ENCODE measurements at regions of chr19 and their contacts with region 1.

Region 1: GRCh38 chr19:53849237-53849676 is 18.4 kb upstream of the MYADM start:
- DNase-seq: peak; percentile 49
- ATAC-seq: peak; percentile 58
- H3K4me3 ChIP-seq: no peak overlapping the region
- H3K27ac ChIP-seq: no peak overlapping the region
- H3K4me1 ChIP-seq: 0 out of 2 replicates have a peak, but pooled peaks cover 6% of the 10 kb centered on the region
- H3K27me3 ChIP-seq: no peaks in the 10 kb centered on the region
- CTCF ChIP-seq: no peak

Region 2: GRCh38 chr19:54029930-54030490 is 180.8 kb after region 1 on chr19:
- CTCF ChIA-PET with region 1: interaction called, 10 read pairs
- POLR2A ChIA-PET with region 1: no interaction called
- intact Hi-C with region 1: no loop called
- DNase-seq: peak; percentile 94
- ATAC-seq: peak; percentile 79
- H3K4me3 ChIP-seq: no peak overlapping the region
- H3K27ac ChIP-seq: no peak overlapping the region
- H3K4me1 ChIP-seq: peaks cover 21% of the 10 kb centered on the region
- H3K27me3 ChIP-seq: no peaks in the 10 kb centered on the region
- CTCF ChIP-seq: peak; percentile 80

Region 3: DNA sequence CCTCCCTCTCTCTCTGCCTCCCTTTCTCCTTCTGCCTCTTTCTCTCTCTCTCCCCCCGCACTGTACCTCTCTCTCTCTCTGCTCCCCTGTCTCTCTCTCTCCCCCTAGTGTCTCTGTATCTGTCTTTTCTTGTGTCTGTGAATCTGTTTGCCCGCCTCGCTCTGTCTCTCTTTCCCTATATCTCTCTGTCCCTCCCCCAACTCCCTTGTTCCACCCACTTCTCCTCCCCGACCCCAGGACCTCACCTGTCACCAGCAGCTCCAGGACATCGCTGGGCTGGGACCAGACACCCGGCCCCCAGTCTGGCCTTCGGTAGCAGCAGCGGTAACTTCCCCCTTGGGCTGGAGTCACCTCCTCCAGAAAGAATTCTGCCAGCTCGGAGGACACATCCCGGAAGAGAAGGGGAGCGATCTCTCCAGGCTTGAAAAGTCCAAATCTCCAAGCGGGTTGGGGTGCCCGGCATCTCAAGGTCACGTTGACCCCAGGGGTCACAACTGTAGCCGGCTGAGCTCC is 247.4 kb after region 1 on chr19:
- CTCF ChIA-PET with region 1: no interaction called
- POLR2A ChIA-PET with region 1: no interaction called
- intact Hi-C with region 1: loop called (anchors 10 kb)
- DNase-seq: peak; percentile 25
- ATAC-seq: peak; percentile 64
- H3K4me3 ChIP-seq: peak overlapping the region; percentile 53; the same call in 1 of the 2 replicates
- H3K27ac ChIP-seq: no peak overlapping the region
- H3K4me1 ChIP-seq: peaks cover 8% of the 10 kb centered on the region
- H3K27me3 ChIP-seq: no peaks in the 10 kb centered on the region
- CTCF ChIP-seq: peak; percentile 52

Measured in PC-3 (cell line).